ENCODE measurements at regions of chr4 and their contacts with region 1.

Region 1: DNA sequence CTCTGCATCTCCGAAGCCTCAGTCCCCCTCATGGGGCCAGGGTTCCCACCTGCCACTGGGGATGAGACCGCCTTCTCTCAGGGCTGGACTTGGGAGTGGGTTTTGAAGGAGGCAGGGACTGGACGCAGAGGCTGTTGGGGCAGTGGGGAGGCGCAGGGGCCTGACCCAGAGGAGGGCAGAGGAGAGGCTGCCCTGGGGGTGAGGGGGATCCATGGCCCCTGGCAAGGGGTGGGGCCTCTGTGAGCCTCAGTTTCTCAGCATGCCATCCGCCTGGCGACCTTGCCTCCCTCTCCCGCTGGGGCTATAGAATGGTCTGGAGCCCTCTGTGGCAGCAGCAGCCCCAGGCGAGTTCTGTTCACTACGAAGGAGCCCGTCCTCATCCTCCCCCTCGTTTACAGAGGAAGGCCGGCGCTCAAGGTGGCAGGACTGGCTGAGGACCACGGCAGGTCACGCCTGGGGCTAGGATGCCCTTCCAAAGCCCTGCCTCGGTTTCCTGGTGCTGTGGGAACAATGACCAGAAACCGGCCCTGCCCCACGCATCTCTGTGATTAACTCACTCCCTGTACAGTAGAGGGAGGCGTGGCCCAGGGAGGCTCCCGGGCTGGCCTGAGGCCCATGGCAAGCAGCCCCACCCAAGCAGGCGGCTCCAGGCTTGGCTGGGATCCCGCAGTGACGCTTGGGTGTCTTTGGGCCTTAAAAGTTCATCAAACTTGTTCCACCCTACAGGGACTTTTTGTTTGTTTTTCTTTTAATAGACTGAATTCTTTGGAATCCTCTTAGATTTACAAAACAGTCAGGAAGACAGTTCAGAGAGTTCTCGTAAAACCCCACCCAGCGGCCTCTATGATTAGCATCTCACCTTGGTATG is 16.0 kb upstream of the SH3TC1 start:
- DNase-seq: peak; percentile 92 to 94
- ATAC-seq: peak; percentile 84 to 95 (median 92)
- H3K4me3 ChIP-seq: no peak overlapping the region
- H3K27ac ChIP-seq: peak overlapping the region in 8 of 10 donors; percentile 45 to 79 (median 68)
- H3K4me1 ChIP-seq: peaks cover 18 to 57% (median 46%) of the 10 kb centered on the region in 9 donors
- H3K27me3 ChIP-seq: no peaks in the 10 kb centered on the region
- CTCF ChIP-seq: no peak

Region 2: DNA sequence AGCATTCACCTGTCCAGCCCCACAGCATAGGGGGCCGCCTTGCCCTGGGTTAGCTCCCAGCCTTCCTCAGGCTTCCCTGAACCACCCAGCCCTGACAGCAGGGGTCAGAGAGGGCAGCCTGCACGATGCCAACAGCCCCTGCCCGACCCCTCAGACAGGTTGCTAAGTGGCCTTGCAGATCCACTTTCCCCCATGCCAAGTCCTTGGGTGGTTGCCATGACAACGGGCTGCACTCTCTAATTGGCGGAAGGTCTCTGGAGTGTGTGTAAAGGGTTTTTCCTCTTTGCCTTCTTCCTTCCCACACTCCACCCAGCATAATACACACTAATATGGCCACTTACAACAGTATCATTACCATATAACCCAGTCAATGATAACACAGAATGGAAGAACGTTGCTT is 143.8 kb before region 1 on chr4:
- intact Hi-C with region 1: no loop called
- DNase-seq: no peak
- ATAC-seq: no peak
- H3K4me3 ChIP-seq: no peak overlapping the region
- H3K27ac ChIP-seq: no peak overlapping the region
- H3K4me1 ChIP-seq: peaks cover 0 to 9% (median 0%) of the 10 kb centered on the region in 9 donors
- H3K27me3 ChIP-seq: no peaks in the 10 kb centered on the region
- CTCF ChIP-seq: no peak

Region 3: DNA sequence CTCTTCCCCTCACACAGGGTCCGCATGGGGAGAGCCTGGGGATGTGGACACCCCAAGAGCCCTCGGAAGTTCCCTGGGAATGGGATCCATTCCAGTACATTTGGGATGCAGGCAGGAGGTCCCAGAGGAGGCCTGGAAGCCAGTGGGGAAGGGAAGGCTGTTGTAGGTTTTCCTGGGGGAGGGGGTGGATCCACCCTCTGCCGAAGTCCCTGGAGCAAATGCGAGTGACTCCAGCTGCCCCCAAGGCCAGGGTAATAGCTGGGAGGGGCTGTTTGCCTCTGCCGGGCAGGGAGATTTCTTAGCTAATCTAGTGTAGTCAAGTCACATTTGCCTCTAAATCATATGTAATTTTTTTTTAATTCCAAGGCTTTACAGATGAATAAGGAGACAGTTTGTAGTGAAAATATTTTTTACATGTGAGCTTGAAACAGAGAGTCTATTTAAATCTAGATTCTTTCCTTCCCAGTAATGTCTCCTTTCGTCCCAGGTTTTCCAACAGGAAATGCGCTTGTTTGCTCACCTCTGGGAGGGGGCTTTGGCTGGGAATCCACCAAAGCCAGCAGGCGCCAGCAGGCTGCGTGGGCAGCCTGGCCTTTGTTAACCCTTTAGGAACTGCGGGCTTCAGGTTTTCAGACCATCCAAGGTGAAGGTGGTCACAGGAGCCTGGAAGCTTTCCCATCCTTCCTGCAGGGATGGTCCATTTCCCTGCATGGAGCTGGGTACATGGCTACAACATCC is 42.8 kb after region 1 on chr4:
- intact Hi-C with region 1: loop called in 2 of 10 experiments (anchors 2 to 10 kb)
- DNase-seq: no peak
- ATAC-seq: no peak
- H3K4me3 ChIP-seq: no peak overlapping the region
- H3K27ac ChIP-seq: no peak overlapping the region
- H3K4me1 ChIP-seq: peaks cover 4 to 56% (median 10%) of the 10 kb centered on the region in 9 donors
- H3K27me3 ChIP-seq: no peaks in the 10 kb centered on the region
- CTCF ChIP-seq: no peak

Measured in heart right ventricle (tissue), 16 donors.